Mammary epithelial cell (primary cell): ENCODE measurements at regions of chr9 and their contacts with region 1.

Region 1: GRCh38 chr9:84845956-84846900 is 176.7 kb downstream of the NTRK2 start:
- DNase-seq: peak; percentile 86
- H3K4me3 ChIP-seq: no peak overlapping the region
- H3K27ac ChIP-seq: peak overlapping the region; percentile 32
- H3K4me1 ChIP-seq: peaks cover 23% of the 10 kb centered on the region
- H3K27me3 ChIP-seq: no peaks in the 10 kb centered on the region
- CTCF ChIP-seq: no peak

Region 2: GRCh38 chr9:84947363-84947972 is 101.2 kb after region 1 on chr9:
- CTCF ChIA-PET with region 1: no interaction called
- dilution Hi-C with region 1: loop called (anchors 5 kb)
- in situ Hi-C with region 1: no loop called
- intact Hi-C with region 1: no loop called
- DNase-seq: peak; percentile 81
- H3K4me3 ChIP-seq: no peak overlapping the region
- H3K27ac ChIP-seq: peak overlapping the region; percentile 38
- H3K4me1 ChIP-seq: peaks cover 17% of the 10 kb centered on the region
- H3K27me3 ChIP-seq: no peaks in the 10 kb centered on the region
- CTCF ChIP-seq: no peak